HEK293 (cell line): ENCODE measurements at regions of chr1 and their contacts with region 1.

Region 1: GRCh38 chr1:100351095-100351891 is 1.0 kb upstream of the CDC14A start:
- H3K4me3 ChIP-seq: peak overlapping the region; percentile 82
- H3K27ac ChIP-seq: peak overlapping the region; percentile 67
- H3K4me1 ChIP-seq: peaks cover 5% of the 10 kb centered on the region; the same call in 1 of the 2 replicates
- CTCF ChIP-seq: peak; percentile 91

Region 2: GRCh38 chr1:100249537-100250257 is 101.6 kb before region 1 on chr1 and contains the start of gene DBT:
- CTCF ChIA-PET with region 1: no interaction called
- POLR2A ChIA-PET with region 1: interaction called, 10 read pairs
- H3K4me3 ChIP-seq: peak within 1 kb of the TSS; percentile 68
- H3K27ac ChIP-seq: peak within 1 kb of the TSS; percentile 37; the same call in 1 of the 2 replicates
- H3K4me1 ChIP-seq: no peaks in the 10 kb centered on the region
- CTCF ChIP-seq: no peak

Region 3: GRCh38 chr1:100308777-100309176 is 42.5 kb before region 1 on chr1:
- CTCF ChIA-PET with region 1: no interaction called
- POLR2A ChIA-PET with region 1: no interaction called
- H3K4me3 ChIP-seq: no peak overlapping the region
- H3K27ac ChIP-seq: no peak overlapping the region
- H3K4me1 ChIP-seq: no peaks in the 10 kb centered on the region
- CTCF ChIP-seq: no peak